Prostate gland (tissue), 2 donors: ENCODE measurements at regions of chr3 and their contacts with region 1.

Region 1: GRCh38 chr3:89107461-89108290 is at the start of gene EPHA3:
- DNase-seq: peak; percentile 45
- H3K4me3 ChIP-seq: peak within 1 kb of the TSS; percentile 32 to 36
- H3K27ac ChIP-seq: peak within 1 kb of the TSS; percentile 13 to 38
- H3K4me1 ChIP-seq: no peaks in the 10 kb centered on the region
- H3K27me3 ChIP-seq: no peaks in the 10 kb centered on the region
- CTCF ChIP-seq: no peak
- POLR2A ChIP-seq: no peak
- total RNA-seq, gene EPHA3: 9.4 to 11.9 TPM

Region 2: GRCh38 chr3:89184151-89184995 is 76.7 kb after region 1 on chr3:
- intact Hi-C with region 1: no loop called
- DNase-seq: no peak
- H3K4me3 ChIP-seq: no peak overlapping the region
- H3K27ac ChIP-seq: no peak overlapping the region
- H3K4me1 ChIP-seq: no peaks in the 10 kb centered on the region
- H3K27me3 ChIP-seq: no peaks in the 10 kb centered on the region
- CTCF ChIP-seq: no peak
- POLR2A ChIP-seq: no peak

Region 3: GRCh38 chr3:89260721-89261120 is 153.0 kb after region 1 on chr3:
- intact Hi-C with region 1: no loop called
- DNase-seq: no peak
- H3K4me3 ChIP-seq: no peak overlapping the region
- H3K27ac ChIP-seq: no peak overlapping the region
- H3K4me1 ChIP-seq: no peaks in the 10 kb centered on the region
- H3K27me3 ChIP-seq: no peaks in the 10 kb centered on the region
- CTCF ChIP-seq: no peak
- POLR2A ChIP-seq: no peak

Region 4: GRCh38 chr3:90091204-90091924 is 983.7 kb after region 1 on chr3:
- intact Hi-C with region 1: loop called (anchors 10 kb)
- DNase-seq: peak; percentile 4
- H3K4me3 ChIP-seq: no peak overlapping the region
- H3K27ac ChIP-seq: no peak overlapping the region
- H3K4me1 ChIP-seq: no peaks in the 10 kb centered on the region
- H3K27me3 ChIP-seq: no peaks in the 10 kb centered on the region
- CTCF ChIP-seq: peak in 3 of 4 experiments; percentile 12 to 39 (median 21)
- POLR2A ChIP-seq: no peak